BJ (cell line): ENCODE measurements at regions of chr2 and their contacts with region 1.

Region 1: GRCh38 chr2:209334198-209335017 is 89.4 kb upstream of the MAP2 start:
- DNase-seq: no peak
- H3K4me3 ChIP-seq: no peak overlapping the region
- H3K27me3 ChIP-seq: no peaks in the 10 kb centered on the region
- CTCF ChIP-seq: peak; percentile 90

Region 2: DNA sequence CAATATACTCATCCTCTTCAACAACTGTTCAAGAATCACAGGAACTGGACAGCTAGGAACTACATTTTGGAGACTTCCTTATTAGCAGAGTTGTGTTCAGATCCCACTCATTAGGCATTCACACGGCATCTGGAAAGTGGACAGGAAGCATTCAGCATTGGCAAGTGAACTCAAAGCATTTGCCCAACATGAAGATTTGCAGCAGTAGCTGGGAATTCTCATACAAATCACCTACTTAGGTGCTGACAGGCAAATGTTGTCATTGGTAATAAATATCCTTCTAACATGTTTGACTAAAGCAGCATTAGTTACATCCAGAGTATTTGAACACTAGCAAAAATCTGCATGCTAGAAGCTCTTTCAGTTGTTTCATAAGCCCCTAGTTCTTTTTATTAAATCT is 577.0 kb before region 1 on chr2:
- CTCF ChIA-PET with region 1: no interaction called
- POLR2A ChIA-PET with region 1: no interaction called
- DNase-seq: no peak
- H3K4me3 ChIP-seq: no peak overlapping the region
- H3K27me3 ChIP-seq: no peaks in the 10 kb centered on the region
- CTCF ChIP-seq: no peak

Region 3: GRCh38 chr2:209322905-209323512 is 11.4 kb before region 1 on chr2:
- CTCF ChIA-PET with region 1: interaction called, 16 read pairs
- POLR2A ChIA-PET with region 1: no interaction called
- DNase-seq: no peak
- H3K4me3 ChIP-seq: no peak overlapping the region
- H3K27me3 ChIP-seq: no peaks in the 10 kb centered on the region
- CTCF ChIP-seq: no peak

Region 4: GRCh38 chr2:209358992-209359391 is 24.6 kb after region 1 on chr2:
- CTCF ChIA-PET with region 1: interaction called, 11 read pairs
- POLR2A ChIA-PET with region 1: no interaction called
- DNase-seq: no peak
- H3K4me3 ChIP-seq: no peak overlapping the region
- H3K27me3 ChIP-seq: no peaks in the 10 kb centered on the region
- CTCF ChIP-seq: no peak

Region 5: GRCh38 chr2:209556354-209556961 is 222.1 kb after region 1 on chr2:
- CTCF ChIA-PET with region 1: interaction called, 54 read pairs
- POLR2A ChIA-PET with region 1: no interaction called
- DNase-seq: no peak
- H3K4me3 ChIP-seq: no peak overlapping the region
- H3K27me3 ChIP-seq: no peaks in the 10 kb centered on the region
- CTCF ChIP-seq: peak; percentile 67

Region 6: DNA sequence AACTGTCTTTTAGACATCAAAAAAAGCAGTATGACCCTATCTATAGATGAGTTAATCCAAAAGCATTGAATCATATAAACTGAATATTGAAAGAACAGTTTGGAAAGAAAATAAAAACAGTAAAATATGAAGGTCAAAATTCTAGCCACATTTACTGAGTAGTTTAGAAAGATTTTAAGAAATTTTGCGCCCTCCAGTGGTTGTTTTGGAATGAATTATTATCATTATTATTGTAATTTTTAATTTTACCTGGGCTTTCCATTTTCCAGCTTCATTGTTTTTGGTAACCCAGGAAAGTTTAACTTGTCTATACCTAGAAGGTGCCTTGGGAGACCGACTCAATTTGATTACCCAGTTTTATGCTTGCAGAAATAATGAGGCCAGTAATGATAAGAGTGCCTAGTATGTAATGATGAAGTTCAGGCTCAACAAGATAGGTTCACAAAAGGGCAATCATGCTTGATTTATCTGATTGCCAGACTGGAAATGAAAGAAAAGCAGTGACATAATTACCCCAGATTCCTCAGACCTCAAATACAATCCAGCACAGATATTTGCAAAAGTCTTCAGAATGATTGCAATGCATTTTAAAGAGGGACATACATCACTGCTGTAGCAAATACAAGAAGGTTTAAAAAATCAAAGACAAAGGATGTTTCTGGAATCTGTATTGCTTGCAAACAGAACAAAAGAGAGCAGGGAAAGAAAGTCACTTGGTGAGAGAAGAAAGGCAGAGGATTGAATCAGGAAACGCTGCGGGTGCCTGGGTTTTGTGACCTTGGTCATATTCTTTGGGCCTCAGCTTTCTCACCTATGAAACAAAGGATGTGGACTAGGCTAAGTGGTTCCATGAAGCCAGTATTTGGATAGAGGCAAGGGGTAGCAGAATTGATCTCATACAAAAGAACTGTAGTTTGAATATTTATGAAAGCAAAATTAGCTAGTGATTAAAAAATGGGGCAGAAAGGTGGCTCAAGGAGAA is 243.3 kb after region 1 on chr2:
- CTCF ChIA-PET with region 1: interaction called, 55 read pairs
- POLR2A ChIA-PET with region 1: no interaction called
- DNase-seq: no peak
- H3K4me3 ChIP-seq: no peak overlapping the region
- H3K27me3 ChIP-seq: no peaks in the 10 kb centered on the region
- CTCF ChIP-seq: peak; percentile 22